AG04449 (cell line): ENCODE measurements at regions of chr6 and their contacts with region 1.

Region 1: DNA sequence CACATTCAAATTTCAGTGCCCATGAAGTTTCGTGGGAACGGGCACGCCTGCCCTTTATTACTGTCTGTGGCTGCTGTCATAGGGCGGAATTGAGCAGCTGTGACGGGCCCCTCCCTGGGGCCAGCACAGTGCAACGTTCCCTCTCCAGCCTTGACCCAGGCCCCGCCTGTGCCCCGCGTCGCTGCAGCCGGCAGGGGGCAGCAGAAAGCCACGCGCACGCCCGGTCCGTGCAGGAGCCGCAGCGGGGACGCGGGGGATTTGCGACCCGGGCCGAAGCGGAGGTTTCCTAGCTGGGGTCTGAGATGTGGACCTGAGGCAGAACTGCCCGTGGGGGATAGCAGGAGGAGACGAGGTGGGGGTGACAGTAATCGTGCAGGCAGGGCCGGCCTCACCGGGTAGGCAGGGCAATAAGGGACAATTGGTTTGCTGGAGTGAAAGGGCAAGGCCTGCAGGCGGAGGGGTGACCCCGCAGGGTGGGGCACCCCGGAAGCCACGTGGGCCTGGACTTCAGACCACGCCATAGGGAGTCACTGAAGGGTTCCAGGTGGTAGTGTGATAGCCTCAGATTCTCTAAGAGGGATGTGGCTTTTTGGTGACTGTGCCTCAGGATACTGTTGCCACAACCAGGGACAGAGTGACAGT is 54.4 kb downstream of the SYTL3 start:
- DNase-seq: no peak
- H3K4me3 ChIP-seq: peak overlapping the region; percentile 63
- CTCF ChIP-seq: peak; percentile 99

Region 2: GRCh38 chr6:158718461-158719046 is 14.3 kb after region 1 on chr6:
- CTCF ChIA-PET with region 1: interaction called, 65 read pairs
- POLR2A ChIA-PET with region 1: no interaction called
- DNase-seq: no peak
- H3K4me3 ChIP-seq: no peak overlapping the region
- CTCF ChIP-seq: peak; percentile 56

Region 3: DNA sequence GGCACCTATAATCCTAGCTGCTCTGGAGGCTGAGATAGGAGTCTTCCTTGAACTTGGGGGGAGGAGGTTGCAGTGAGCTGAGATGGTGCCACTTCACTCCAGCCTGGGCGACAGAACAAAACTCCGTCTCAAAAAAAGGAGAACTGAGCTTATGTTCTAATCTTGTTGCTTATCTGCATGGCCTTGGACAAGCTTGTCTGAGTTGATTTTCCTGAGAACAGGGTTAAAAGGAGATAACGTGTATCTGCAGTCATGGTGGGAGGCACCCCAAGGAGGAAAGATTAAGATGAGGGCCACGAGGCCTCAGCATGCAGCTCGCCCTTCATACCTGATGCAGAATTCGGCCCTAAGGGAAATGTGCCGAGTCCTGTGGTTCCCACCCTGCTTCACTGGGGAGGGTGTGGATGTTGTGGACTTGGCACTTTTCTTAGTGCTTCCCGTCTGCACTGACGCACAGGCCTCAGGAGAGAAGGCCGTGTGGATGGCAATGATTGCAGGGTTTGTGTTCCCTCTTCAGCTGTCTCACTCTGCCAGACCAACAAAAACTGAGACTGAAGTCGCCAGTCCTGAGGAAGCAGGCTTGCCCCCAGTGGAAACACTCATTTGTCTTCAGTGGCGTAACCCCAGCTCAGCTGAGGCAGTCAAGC is 58.6 kb after region 1 on chr6:
- CTCF ChIA-PET with region 1: interaction called, 13 read pairs
- POLR2A ChIA-PET with region 1: no interaction called
- DNase-seq: no peak
- H3K4me3 ChIP-seq: no peak overlapping the region
- CTCF ChIP-seq: no peak

Region 4: DNA sequence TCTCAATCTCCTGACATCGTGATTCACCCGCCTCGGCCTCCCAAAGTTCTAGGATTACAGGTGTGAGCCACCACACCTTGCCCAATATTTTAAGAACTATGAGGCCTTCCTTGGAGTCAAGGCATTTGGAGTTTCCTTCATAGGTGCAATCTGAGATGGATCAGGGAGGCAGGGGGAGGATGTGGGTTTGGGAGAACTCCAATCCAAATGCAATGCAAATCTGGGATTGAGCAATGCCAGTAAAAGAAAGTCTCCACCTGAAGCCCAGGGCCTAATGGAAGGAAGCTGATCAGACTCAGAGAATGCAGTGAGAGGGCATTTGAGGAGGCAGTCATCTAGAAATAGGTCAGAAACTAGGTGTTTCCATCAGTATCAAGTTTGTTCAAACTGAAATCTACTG is 274.5 kb after region 1 on chr6:
- CTCF ChIA-PET with region 1: interaction called, 92 read pairs
- POLR2A ChIA-PET with region 1: no interaction called
- DNase-seq: no peak
- H3K4me3 ChIP-seq: no peak overlapping the region
- CTCF ChIP-seq: no peak

Region 5: DNA sequence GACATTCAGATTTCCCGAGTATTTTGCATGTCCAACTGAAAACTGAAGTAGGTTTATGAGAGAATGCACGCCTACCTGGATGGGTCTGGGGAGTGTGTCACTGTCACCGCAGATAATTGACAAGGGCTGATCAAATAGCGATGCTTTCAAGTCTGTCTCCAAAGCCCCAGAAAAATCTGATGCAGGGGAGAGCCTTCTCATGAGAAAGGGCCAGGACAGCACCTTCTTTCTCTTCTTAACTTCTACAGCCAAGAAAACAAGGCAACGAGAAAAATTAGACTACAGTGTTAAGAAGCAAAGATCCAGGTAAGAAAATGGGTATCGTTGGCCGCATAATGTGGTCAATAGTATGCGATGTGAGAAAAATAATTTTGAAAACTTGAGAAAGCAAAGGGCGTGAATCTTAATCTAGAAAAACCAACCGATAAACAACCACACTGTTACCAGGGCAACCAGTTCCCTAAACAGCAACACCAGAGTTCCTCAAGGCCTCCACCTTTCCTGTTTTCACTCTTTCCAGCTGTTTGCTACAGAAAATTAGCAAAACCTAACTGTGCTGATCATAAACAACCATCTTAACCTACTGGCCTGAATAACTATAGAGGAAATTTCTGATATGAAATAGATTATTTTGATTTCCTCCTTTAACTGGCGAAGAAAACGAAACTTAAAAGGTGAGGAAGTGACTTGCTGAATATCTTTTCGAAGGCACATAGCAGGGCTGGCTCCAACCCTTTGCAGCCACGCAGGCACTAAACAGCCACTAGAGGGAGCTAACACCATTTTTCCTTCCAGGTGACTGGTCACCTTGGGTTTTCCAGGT is 337.9 kb after region 1 on chr6:
- CTCF ChIA-PET with region 1: no interaction called
- POLR2A ChIA-PET with region 1: no interaction called
- DNase-seq: no peak
- H3K4me3 ChIP-seq: no peak overlapping the region
- CTCF ChIP-seq: peak; percentile 88